IMR-90 (cell line): ENCODE measurements at regions of chr1 and their contacts with region 1.

Region 1: DNA sequence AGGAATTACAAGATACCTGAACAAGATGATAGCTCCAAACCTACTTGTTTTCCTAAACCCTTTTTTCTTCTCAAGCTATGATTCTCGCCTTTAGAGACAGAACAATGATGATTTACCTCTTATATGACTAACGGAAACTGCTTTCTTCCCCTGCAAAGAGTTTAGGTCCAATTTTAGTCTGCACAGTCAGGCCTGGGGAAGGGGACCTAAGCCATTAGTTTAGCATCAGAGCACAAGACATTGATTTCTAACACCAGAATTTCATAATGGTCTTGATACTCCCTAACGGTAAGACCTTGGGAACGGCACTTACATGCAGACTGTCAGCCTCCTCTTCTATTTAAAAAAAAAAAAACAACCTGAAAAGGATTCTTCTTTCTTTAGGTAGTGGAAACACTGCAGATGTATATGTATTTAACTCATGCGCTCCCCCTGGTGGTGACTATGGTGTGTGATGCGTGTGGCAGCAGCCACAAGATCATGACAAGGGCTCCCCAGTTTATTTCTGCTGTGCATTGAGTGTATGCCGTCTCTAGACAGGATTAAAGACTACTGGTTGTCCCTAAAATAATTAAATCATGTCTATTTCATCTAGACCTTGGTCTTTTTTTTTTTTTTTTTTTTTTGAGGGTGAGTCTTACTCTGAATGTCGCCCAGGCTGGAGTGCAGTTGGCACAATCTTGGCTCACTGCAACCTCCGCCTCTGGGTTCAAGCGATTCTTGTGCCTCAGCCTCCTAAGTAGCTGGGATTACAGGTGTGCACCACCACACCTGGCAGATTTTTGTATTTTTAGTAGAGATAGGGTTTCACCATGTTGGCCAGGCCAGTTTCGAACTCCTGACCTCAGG is 37.3 kb upstream of the TMEM222 start:
- DNase-seq: peak; percentile 76
- ATAC-seq: peak; percentile 91
- H3K4me3 ChIP-seq: no peak overlapping the region
- H3K27ac ChIP-seq: no peak overlapping the region
- H3K4me1 ChIP-seq: no peaks in the 10 kb centered on the region
- H3K27me3 ChIP-seq: no peaks in the 10 kb centered on the region
- CTCF ChIP-seq: peak; percentile 81
- POLR2A ChIP-seq: no peak
- RAD21 ChIP-seq: peak; percentile 79

Region 2: GRCh38 chr1:27102707-27103491 is 181.8 kb before region 1 on chr1:
- CTCF ChIA-PET with region 1: interaction called, 13 read pairs
- POLR2A ChIA-PET with region 1: interaction called, 5 read pairs
- dilution Hi-C with region 1: no loop called
- in situ Hi-C with region 1: loop called (anchors 5 kb)
- intact Hi-C with region 1: loop called (anchors 1 kb)
- DNase-seq: peak; percentile 40
- ATAC-seq: peak; percentile 76
- H3K4me3 ChIP-seq: no peak overlapping the region
- H3K27ac ChIP-seq: no peak overlapping the region
- H3K4me1 ChIP-seq: peaks cover 16% of the 10 kb centered on the region
- H3K27me3 ChIP-seq: no peaks in the 10 kb centered on the region
- CTCF ChIP-seq: peak; percentile 96
- POLR2A ChIP-seq: 0 out of 2 replicates have a peak, but pooled peaks have one; percentile 24
- RAD21 ChIP-seq: peak; percentile 96

Region 3: GRCh38 chr1:27201295-27201694 is 83.4 kb before region 1 on chr1:
- CTCF ChIA-PET with region 1: interaction called, 3 read pairs
- POLR2A ChIA-PET with region 1: no interaction called
- dilution Hi-C with region 1: no loop called
- in situ Hi-C with region 1: no loop called
- intact Hi-C with region 1: loop called (anchors 1 kb)
- DNase-seq: no peak
- ATAC-seq: no peak
- H3K4me3 ChIP-seq: no peak overlapping the region
- H3K27ac ChIP-seq: no peak overlapping the region
- H3K4me1 ChIP-seq: peaks cover 2% of the 10 kb centered on the region; the same call in 1 of the 2 replicates
- H3K27me3 ChIP-seq: peaks cover 18% of the 10 kb centered on the region
- CTCF ChIP-seq: no peak
- POLR2A ChIP-seq: no peak
- RAD21 ChIP-seq: no peak

Region 4: DNA sequence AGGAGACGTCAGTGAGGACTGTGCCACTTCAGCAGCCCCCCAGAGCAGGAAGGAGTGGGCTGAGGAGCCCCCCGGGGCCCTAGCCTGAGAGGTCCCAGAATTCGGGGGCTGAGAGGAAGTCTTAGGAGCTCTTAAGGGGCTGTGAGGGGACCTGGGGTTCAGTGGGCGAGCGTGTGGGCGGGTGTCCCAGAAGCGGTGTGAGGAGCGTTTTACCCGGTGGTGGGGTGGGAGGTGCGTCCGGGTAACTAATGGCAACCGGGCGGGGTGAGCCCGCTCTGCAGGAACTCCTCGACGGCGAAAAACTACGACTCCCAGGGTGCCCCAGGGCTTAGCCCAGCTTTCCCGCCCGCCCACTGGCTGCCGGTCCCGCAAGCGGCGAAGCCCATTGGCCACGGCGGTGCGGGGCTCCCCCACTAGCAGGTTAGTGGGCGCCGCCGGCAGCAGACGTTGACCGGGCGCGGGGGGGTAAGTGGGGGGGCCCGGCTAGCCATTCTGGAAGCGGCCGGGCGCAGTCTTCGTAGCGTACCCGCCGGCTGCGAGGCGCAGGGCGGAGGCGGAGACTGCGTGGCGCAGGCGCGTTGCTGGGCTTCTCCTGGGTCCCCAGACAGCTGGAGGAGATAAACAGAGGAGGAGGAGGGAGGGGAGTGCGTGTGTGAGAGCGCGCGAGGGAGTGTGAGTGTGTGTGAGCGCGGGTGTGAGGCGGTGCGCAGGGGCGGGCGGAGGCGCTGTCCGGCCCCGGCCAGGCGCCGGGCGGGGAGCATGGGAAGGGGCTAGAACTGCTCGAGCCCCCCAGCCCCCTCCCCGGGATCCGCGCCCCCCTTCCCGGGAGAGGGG is 50.4 kb before region 1 on chr1 and contains the start of gene WDTC1:
- CTCF ChIA-PET with region 1: no interaction called
- POLR2A ChIA-PET with region 1: no interaction called
- dilution Hi-C with region 1: no loop called
- in situ Hi-C with region 1: no loop called
- intact Hi-C with region 1: no loop called
- DNase-seq: peak; percentile 95
- ATAC-seq: peak; percentile 97
- H3K4me3 ChIP-seq: peak within 1 kb of the TSS; percentile 55
- H3K27ac ChIP-seq: no peak within 1 kb of the TSS; the same call in 1 of the 2 replicates
- H3K4me1 ChIP-seq: peaks cover 4% of the 10 kb centered on the region; the same call in 1 of the 2 replicates
- H3K27me3 ChIP-seq: no peaks in the 10 kb centered on the region
- CTCF ChIP-seq: no peak
- POLR2A ChIP-seq: 0 out of 2 replicates have a peak, but pooled peaks have one; percentile 35
- RAD21 ChIP-seq: no peak
- total RNA-seq, gene WDTC1: 9.9 and 10.0 TPM in 2 replicates

Region 5: DNA sequence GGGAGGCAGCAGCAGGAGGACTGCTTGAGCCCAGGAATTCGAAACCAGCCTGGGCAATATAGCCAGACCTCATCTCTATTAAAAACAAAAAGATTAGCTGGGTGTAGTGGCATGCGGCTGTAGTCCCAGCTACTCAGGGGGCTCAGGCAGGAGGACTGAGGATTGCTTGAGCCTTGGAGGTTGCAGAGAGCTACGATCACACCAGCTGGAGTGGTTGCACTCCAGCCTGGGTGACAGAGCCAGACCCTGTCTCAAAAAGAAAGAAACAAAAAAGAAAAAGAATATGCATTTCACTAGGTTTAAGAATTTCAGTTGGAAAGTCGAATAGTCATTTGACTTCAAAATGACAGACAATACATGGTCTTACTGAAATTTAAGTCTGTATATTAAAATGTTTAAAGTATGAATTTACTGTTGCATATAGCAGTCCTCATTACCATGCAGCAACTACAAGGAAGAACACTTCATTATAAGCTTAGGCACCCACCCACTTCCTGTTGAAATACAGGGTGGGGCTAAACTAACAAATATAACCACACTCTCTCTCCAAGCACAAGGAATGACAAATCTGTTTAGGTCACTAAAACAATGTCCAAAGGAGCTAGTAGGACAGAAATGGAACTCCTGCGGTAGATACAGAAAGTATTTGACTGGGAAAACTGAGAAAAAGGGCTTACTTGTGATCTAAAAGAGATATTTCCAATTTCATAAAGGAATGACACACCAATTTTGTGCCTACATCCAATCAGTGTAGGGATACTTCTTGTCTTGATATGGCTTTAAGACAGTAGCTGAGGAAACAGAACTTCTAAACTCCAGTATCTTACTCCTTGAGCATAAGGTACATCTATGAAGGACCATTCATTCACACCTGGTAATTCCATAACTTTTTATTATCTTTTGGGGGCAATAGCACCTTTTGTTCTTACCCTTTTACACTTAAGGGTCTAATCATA is 151.8 kb after region 1 on chr1:
- CTCF ChIA-PET with region 1: no interaction called
- POLR2A ChIA-PET with region 1: no interaction called
- dilution Hi-C with region 1: no loop called
- in situ Hi-C with region 1: no loop called
- intact Hi-C with region 1: no loop called
- DNase-seq: peak; percentile 60
- ATAC-seq: peak; percentile 77
- H3K4me3 ChIP-seq: no peak overlapping the region
- H3K27ac ChIP-seq: no peak overlapping the region
- H3K4me1 ChIP-seq: peaks cover 27% of the 10 kb centered on the region
- H3K27me3 ChIP-seq: no peaks in the 10 kb centered on the region
- CTCF ChIP-seq: no peak
- POLR2A ChIP-seq: no peak
- RAD21 ChIP-seq: no peak